HEK293 (cell line): ENCODE measurements at regions of chr1 and their contacts with region 1.

Region 1: DNA sequence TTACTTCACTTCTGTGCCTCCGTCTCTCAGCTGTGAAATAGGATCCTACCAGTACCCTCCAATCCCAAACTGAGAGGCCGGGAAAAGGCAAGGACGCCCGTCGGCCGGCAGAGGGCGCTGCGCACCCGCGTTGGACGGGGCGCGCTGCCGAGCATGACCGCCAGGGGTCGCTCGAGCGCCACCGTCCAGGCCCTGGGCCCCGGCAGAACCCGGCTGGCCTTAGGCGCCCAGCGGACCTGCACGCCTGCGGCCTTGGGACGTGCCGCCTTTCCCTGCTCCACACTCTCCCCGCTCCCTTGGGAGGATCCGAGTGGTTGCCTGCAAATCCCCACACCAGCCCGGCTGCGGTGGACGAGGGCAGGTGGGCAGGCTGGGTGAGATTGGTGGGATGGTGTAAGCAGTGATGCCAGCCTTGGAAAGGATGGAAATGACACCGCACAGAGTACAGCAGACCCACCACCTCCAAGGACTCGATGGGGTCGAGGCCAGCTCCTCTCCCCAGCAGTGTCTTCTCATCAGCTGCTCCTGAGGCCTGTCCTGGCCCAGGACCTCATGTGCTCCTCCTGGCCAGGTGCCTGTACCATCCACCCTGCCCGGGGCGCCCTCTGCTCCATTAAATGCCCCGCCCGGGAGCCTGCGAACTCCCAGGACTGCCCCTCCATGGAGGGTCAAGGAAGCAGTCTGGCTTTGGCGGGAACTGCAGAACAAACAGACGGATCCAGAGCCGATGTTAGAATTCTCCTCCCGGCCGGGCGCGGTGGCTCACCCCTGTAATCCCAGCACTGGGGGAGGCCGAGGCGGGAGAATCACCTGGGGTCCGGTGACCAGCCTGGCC is 47.4 kb upstream of the LBR start:
- H3K4me3 ChIP-seq: no peak overlapping the region
- H3K27ac ChIP-seq: no peak overlapping the region; the same call in 1 of the 2 replicates
- H3K4me1 ChIP-seq: no peaks in the 10 kb centered on the region
- CTCF ChIP-seq: peak; percentile 100

Region 2: GRCh38 chr1:225318706-225319575 is 156.3 kb before region 1 on chr1:
- CTCF ChIA-PET with region 1: interaction called, 17 read pairs
- POLR2A ChIA-PET with region 1: no interaction called
- H3K4me3 ChIP-seq: no peak overlapping the region
- H3K27ac ChIP-seq: no peak overlapping the region
- H3K4me1 ChIP-seq: no peaks in the 10 kb centered on the region
- CTCF ChIP-seq: peak; percentile 88

Region 3: GRCh38 chr1:225508538-225509375 is 33.6 kb after region 1 on chr1:
- CTCF ChIA-PET with region 1: interaction called, 11 read pairs
- POLR2A ChIA-PET with region 1: no interaction called
- H3K4me3 ChIP-seq: no peak overlapping the region; the same call in 1 of the 2 replicates
- H3K27ac ChIP-seq: peak overlapping the region; percentile 53
- H3K4me1 ChIP-seq: peaks cover 36% of the 10 kb centered on the region
- CTCF ChIP-seq: no peak

Region 4: DNA sequence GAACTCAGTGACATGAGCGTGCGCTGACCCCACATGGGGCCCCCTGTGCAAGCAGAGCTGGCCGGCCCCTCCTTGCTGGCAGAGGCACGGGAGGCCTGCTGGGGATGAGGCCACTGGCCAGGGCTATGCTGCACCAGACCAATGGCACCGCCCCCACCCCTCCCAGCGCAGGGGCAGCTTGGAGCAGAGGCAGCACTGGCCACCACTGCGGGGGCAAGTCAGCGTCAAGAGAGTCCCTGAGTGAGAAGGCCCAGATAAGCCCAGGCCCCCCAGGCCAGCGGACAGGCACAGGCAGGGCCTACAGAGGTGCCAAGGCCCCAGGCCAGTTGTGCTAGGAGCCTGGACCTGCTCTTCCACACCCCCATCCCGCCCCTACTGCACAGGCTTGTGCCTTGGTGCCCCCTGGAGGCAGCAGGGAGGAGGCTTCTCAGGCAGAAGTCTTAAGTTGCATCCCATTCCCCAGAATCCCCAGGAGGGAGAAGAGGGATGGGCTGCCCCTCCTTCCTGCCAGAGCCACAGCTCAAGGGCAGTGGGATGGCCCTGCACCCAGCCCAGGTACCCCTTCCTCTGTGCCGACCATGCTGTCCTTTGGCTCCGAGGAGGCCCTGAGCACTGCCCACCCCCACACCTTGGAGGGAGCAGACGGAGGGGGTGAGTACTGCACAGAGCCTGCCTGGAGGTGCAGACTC is 370.5 kb after region 1 on chr1:
- CTCF ChIA-PET with region 1: interaction called, 104 read pairs
- POLR2A ChIA-PET with region 1: interaction called, 6 read pairs
- H3K4me3 ChIP-seq: no peak overlapping the region
- H3K27ac ChIP-seq: no peak overlapping the region; the same call in 1 of the 2 replicates
- H3K4me1 ChIP-seq: no peaks in the 10 kb centered on the region
- CTCF ChIP-seq: peak; percentile 98

Region 5: DNA sequence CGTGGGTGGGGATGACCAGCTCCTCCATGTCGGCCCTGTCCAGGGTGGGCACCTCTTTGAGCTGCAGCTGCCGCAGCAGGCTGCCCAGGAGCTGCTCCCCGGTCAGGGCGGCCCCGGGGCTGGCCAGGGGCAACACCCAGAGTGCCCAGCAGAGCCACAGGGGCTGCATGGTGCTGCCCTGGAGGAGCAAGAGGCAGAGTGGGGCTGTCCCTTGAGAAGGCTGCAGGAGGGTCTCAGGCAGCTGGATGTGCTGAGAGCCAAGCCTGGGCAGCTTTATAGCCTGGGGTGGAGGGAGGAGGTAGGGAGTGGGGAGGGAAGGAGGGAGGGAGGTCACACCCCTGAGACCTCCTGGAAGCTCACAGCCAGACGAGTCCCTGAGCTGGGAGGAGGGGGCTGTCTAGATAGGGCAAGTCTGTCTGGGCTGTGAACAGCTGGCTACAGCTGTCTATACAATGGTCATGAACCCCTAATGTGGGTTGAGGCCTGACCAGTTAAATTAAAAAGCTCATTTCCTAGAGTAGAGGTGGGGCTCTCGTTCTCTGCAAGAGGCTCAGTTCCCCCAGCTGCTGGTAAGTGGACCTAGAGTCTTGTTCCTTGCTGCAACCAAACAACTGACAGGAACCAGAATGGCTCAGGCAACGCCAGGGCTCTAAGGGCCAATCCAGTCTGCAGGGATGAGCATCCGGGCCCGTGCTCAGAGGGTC is 413.8 kb after region 1 on chr1 and contains the start of gene LEFTY1:
- CTCF ChIA-PET with region 1: interaction called, 12 read pairs
- POLR2A ChIA-PET with region 1: no interaction called
- H3K4me3 ChIP-seq: no peak within 1 kb of the TSS
- H3K27ac ChIP-seq: no peak within 1 kb of the TSS
- H3K4me1 ChIP-seq: no peaks in the 10 kb centered on the region
- CTCF ChIP-seq: no peak

Region 6: GRCh38 chr1:225933072-225933471 is 457.9 kb after region 1 on chr1:
- CTCF ChIA-PET with region 1: interaction called, 11 read pairs
- POLR2A ChIA-PET with region 1: no interaction called
- H3K4me3 ChIP-seq: no peak overlapping the region
- H3K27ac ChIP-seq: no peak overlapping the region
- H3K4me1 ChIP-seq: no peaks in the 10 kb centered on the region
- CTCF ChIP-seq: no peak

Region 7: GRCh38 chr1:225987491-225988316 is 512.5 kb after region 1 on chr1:
- CTCF ChIA-PET with region 1: interaction called, 15 read pairs
- POLR2A ChIA-PET with region 1: interaction called, 4 read pairs
- H3K4me3 ChIP-seq: no peak overlapping the region
- H3K27ac ChIP-seq: no peak overlapping the region
- H3K4me1 ChIP-seq: no peaks in the 10 kb centered on the region
- CTCF ChIP-seq: peak; percentile 53; the same call in 1 of the 2 replicates